Activated B cell treated with CpG ODN at 0.5 μM for 24 hours (primary cell): ENCODE measurements at regions of chr5 and their contacts with region 1.

Region 1: GRCh38 chr5:64784451-64785025 is 15.8 kb downstream of the CWC27 start:
- DNase-seq: no peak
- ATAC-seq: peak; percentile 49
- H3K4me3 Mint-ChIP-seq: no peak overlapping the region
- H3K27ac Mint-ChIP-seq: no peak overlapping the region
- H3K4me1 Mint-ChIP-seq: no peaks in the 10 kb centered on the region
- H3K27me3 Mint-ChIP-seq: no peaks in the 10 kb centered on the region
- CTCF ChIP-seq: peak; percentile 83

Region 2: GRCh38 chr5:64634997-64635686 is 149.4 kb before region 1 on chr5:
- CTCF ChIA-PET with region 1: interaction called, 55 read pairs
- POLR2A ChIA-PET with region 1: no interaction called
- intact Hi-C with region 1: loop called (anchors 1 kb)
- DNase-seq: no peak
- ATAC-seq: no peak
- H3K4me3 Mint-ChIP-seq: no peak overlapping the region
- H3K27ac Mint-ChIP-seq: no peak overlapping the region
- H3K4me1 Mint-ChIP-seq: no peaks in the 10 kb centered on the region
- H3K27me3 Mint-ChIP-seq: peaks cover 20% of the 10 kb centered on the region
- CTCF ChIP-seq: peak; percentile 76